Activated naive CD4-positive, alpha-beta T cell treated with anti-CD3 and anti-CD28 coated beads for 36 hours (primary cell): ENCODE measurements at regions of chr2 and their contacts with region 1.

Region 1: GRCh38 chr2:168194784-168195522 is 52.4 kb downstream of the STK39 start:
- DNase-seq: peak; percentile 60
- H3K4me3 Mint-ChIP-seq: peak overlapping the region; percentile 53
- H3K27ac Mint-ChIP-seq: peak overlapping the region; percentile 91
- H3K4me1 Mint-ChIP-seq: peaks cover 85% of the 10 kb centered on the region
- H3K27me3 Mint-ChIP-seq: no peaks in the 10 kb centered on the region

Region 2: GRCh38 chr2:168060986-168061750 is 133.8 kb before region 1 on chr2:
- CTCF ChIA-PET with region 1: no interaction called
- intact Hi-C with region 1: no loop called
- DNase-seq: no peak
- H3K4me3 Mint-ChIP-seq: no peak overlapping the region
- H3K27ac Mint-ChIP-seq: no peak overlapping the region
- H3K4me1 Mint-ChIP-seq: no peaks in the 10 kb centered on the region
- H3K27me3 Mint-ChIP-seq: no peaks in the 10 kb centered on the region

Region 3: DNA sequence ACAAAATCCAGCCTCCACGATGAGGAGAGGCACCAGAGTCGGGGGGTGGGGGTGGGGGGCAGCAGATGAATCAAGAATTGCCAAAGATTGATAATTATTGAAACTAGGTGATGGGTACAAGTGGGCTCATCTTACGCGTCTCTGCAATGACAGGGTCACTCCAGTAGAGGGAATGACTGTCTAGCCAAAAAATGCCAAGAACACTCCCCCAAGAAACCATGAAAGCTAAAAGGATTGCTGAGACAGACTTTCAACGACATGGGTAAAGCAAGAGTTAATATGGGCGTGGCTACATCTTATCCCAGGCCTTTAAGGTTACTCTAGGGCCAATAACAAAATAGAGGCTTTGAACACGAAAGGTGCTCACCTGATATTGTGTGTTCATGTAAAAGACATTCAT is 34.1 kb before region 1 on chr2:
- CTCF ChIA-PET with region 1: interaction called, 5 read pairs
- intact Hi-C with region 1: loop called (anchors 1 kb)
- DNase-seq: peak; percentile 32
- H3K4me3 Mint-ChIP-seq: no peak overlapping the region
- H3K27ac Mint-ChIP-seq: no peak overlapping the region
- H3K4me1 Mint-ChIP-seq: peaks cover 32% of the 10 kb centered on the region
- H3K27me3 Mint-ChIP-seq: no peaks in the 10 kb centered on the region

Region 4: DNA sequence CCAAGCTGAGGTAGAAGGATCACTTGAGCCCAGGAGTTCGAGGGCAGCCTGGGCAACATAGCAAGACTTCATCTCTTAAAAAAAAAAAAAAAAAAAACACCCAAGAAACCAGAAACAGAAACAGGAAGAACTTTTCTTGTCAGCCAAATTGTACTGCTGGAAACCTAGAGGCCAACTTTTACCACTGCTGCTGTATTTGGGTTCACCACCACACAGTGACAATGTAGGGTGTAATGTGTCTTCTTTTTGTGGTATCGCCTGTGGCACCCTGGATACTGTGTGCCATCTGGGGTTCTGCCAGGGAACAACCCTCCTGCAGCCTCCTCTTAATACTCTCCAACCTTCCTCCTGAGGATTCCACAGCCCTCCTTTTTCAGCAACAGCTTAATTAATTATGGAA is 20.2 kb before region 1 on chr2:
- CTCF ChIA-PET with region 1: interaction called, 3 read pairs
- intact Hi-C with region 1: loop called (anchors 2 kb)
- DNase-seq: no peak
- H3K4me3 Mint-ChIP-seq: no peak overlapping the region
- H3K27ac Mint-ChIP-seq: no peak overlapping the region
- H3K4me1 Mint-ChIP-seq: peaks cover 49% of the 10 kb centered on the region
- H3K27me3 Mint-ChIP-seq: no peaks in the 10 kb centered on the region

Region 5: DNA sequence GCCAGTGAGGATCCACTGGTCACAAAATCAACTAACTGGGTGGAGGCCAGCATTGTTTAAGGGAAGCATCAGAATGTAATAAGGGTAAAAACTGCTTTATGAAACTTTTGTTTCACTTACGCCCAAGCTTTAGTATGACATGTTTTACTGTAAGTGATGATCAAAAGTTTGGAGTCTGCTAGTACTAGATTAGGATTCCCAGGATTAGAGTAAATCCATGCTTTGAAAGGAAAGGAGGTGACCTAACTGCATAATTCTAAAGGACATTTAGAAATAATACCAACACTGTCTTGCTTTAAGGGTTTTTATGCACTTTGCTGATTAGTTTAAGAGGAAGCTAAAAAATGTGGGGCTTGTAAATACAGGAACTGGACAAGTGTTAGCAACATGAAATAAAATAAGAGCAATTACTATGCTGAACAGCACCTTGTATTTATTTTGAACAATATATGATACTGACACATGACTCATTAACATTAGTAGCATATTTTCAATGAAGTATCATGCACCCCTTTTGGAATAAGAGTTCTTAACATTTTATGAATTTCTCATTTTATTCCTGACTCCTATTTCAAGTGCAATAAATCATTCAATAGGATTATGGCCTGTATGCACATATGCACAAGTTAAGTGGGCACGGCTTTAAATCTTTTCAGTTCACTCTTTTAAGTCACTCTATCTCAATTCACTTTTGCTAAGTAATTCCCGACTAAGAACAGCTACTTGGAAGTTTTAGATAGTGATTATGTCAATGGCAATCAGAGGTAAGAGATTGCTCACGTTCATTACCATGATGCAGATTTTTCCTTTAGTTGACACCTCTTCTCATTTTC is 10.1 kb before region 1 on chr2:
- CTCF ChIA-PET with region 1: interaction called, 6 read pairs
- intact Hi-C with region 1: loop called (anchors 1 kb)
- DNase-seq: no peak
- H3K4me3 Mint-ChIP-seq: no peak overlapping the region
- H3K27ac Mint-ChIP-seq: no peak overlapping the region
- H3K4me1 Mint-ChIP-seq: peaks cover 55% of the 10 kb centered on the region
- H3K27me3 Mint-ChIP-seq: no peaks in the 10 kb centered on the region

Region 6: GRCh38 chr2:168224346-168224745 is 29.4 kb after region 1 on chr2:
- CTCF ChIA-PET with region 1: no interaction called
- intact Hi-C with region 1: loop called (anchors 1 kb)
- DNase-seq: no peak
- H3K4me3 Mint-ChIP-seq: no peak overlapping the region
- H3K27ac Mint-ChIP-seq: no peak overlapping the region
- H3K4me1 Mint-ChIP-seq: peaks cover 46% of the 10 kb centered on the region
- H3K27me3 Mint-ChIP-seq: no peaks in the 10 kb centered on the region

Region 7: DNA sequence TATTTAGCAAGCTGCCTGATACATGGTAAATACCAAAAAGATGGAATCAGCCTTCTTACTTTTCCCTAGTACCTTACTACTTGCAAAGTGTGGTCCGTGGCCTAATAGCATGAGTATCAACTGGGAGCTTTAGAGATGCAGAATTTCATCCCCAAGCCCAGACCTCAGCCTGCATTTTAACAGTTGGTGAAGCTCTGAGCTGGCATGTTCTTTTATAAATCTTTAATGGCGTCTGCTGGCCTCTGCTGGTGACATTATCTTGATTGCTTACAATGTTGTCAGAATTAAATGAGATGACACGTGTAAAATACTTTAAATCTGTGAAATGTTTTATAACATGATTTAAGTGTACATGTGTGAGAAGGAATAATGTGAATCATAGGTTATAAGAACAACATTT is 492.4 kb after region 1 on chr2:
- CTCF ChIA-PET with region 1: no interaction called
- intact Hi-C with region 1: no loop called
- DNase-seq: peak; percentile 53
- H3K4me3 Mint-ChIP-seq: no peak overlapping the region
- H3K27ac Mint-ChIP-seq: no peak overlapping the region
- H3K4me1 Mint-ChIP-seq: no peaks in the 10 kb centered on the region
- H3K27me3 Mint-ChIP-seq: no peaks in the 10 kb centered on the region